ENCODE measurements at regions of chr11 and their contacts with region 1.

Region 1: GRCh38 chr11:10540923-10541560 is at the start of gene RNF141:
- DNase-seq: peak; percentile 89 to 98 (median 95)
- ATAC-seq: peak; percentile 98
- H3K4me3 ChIP-seq: peak within 1 kb of the TSS; percentile 78 to 83
- H3K4me3 Mint-ChIP-seq: peak within 1 kb of the TSS; percentile 91
- H3K27ac ChIP-seq: peak within 1 kb of the TSS; percentile 77 to 85
- H3K27ac Mint-ChIP-seq: peak within 1 kb of the TSS; percentile 89
- H3K4me1 ChIP-seq: peaks cover 13% of the 10 kb centered on the region
- H3K4me1 Mint-ChIP-seq: peaks cover 32% of the 10 kb centered on the region
- H3K27me3 ChIP-seq: no peaks in the 10 kb centered on the region
- H3K27me3 Mint-ChIP-seq: no peaks in the 10 kb centered on the region
- CTCF ChIP-seq: peak; percentile 85
- total RNA-seq, gene RNF141: 17.3 to 19.2 TPM

Region 2: GRCh38 chr11:8964324-8965320 is 1576.4 kb before region 1 on chr11 and contains the start of gene TMEM9B:
- CTCF ChIA-PET with region 1: no interaction called
- POLR2A ChIA-PET with region 1: no interaction called
- intact Hi-C with region 1: loop called in 1 of 2 experiments (anchors 5 kb)
- DNase-seq: peak; percentile 48 to 89 (median 75)
- ATAC-seq: peak; percentile 72
- H3K4me3 ChIP-seq: peak within 1 kb of the TSS; percentile 93 to 98
- H3K4me3 Mint-ChIP-seq: peak within 1 kb of the TSS; percentile 98
- H3K27ac ChIP-seq: peak within 1 kb of the TSS; percentile 94 to 99
- H3K27ac Mint-ChIP-seq: peak within 1 kb of the TSS; percentile 98
- H3K4me1 ChIP-seq: peaks cover 24% of the 10 kb centered on the region
- H3K4me1 Mint-ChIP-seq: peaks cover 36% of the 10 kb centered on the region
- H3K27me3 ChIP-seq: no peaks in the 10 kb centered on the region
- H3K27me3 Mint-ChIP-seq: no peaks in the 10 kb centered on the region
- CTCF ChIP-seq: no peak
- total RNA-seq, gene TMEM9B: 27.5 to 28.5 TPM

Region 3: GRCh38 chr11:10441652-10442503 is 99.2 kb before region 1 on chr11:
- CTCF ChIA-PET with region 1: interaction called, 12 read pairs
- POLR2A ChIA-PET with region 1: no interaction called
- intact Hi-C with region 1: no loop called
- DNase-seq: peak in 2 of 9 experiments; percentile 30 to 55
- ATAC-seq: peak; percentile 69
- H3K4me3 ChIP-seq: no peak overlapping the region
- H3K4me3 Mint-ChIP-seq: peak overlapping the region; percentile 4
- H3K27ac ChIP-seq: peak overlapping the region in 1 of 2 experiments; percentile 39
- H3K27ac Mint-ChIP-seq: peak overlapping the region; percentile 82
- H3K4me1 ChIP-seq: peaks cover 24% of the 10 kb centered on the region
- H3K4me1 Mint-ChIP-seq: peaks cover 41% of the 10 kb centered on the region
- H3K27me3 ChIP-seq: no peaks in the 10 kb centered on the region
- H3K27me3 Mint-ChIP-seq: no peaks in the 10 kb centered on the region
- CTCF ChIP-seq: no peak

Region 4: GRCh38 chr11:10455637-10456487 is 85.2 kb before region 1 on chr11:
- CTCF ChIA-PET with region 1: interaction called, 19 read pairs
- POLR2A ChIA-PET with region 1: interaction called, 11 read pairs
- intact Hi-C with region 1: loop called (anchors 2 to 5 kb)
- DNase-seq: peak; percentile 30 to 87 (median 74)
- ATAC-seq: peak; percentile 74
- H3K4me3 ChIP-seq: peak overlapping the region; percentile 52 to 54
- H3K4me3 Mint-ChIP-seq: peak overlapping the region; percentile 91
- H3K27ac ChIP-seq: peak overlapping the region; percentile 10 to 67
- H3K27ac Mint-ChIP-seq: peak overlapping the region; percentile 98
- H3K4me1 ChIP-seq: peaks cover 58% of the 10 kb centered on the region
- H3K4me1 Mint-ChIP-seq: peaks cover 81% of the 10 kb centered on the region
- H3K27me3 ChIP-seq: no peaks in the 10 kb centered on the region
- H3K27me3 Mint-ChIP-seq: no peaks in the 10 kb centered on the region
- CTCF ChIP-seq: no peak

Region 5: GRCh38 chr11:10653926-10654810 is 113.1 kb after region 1 on chr11:
- CTCF ChIA-PET with region 1: interaction called, 13 read pairs
- POLR2A ChIA-PET with region 1: no interaction called
- intact Hi-C with region 1: loop called in 1 of 2 experiments (anchors 2 kb)
- DNase-seq: peak in 7 of 9 experiments; percentile 17 to 75 (median 35)
- ATAC-seq: peak; percentile 71
- H3K4me3 ChIP-seq: no peak overlapping the region
- H3K4me3 Mint-ChIP-seq: no peak overlapping the region
- H3K27ac ChIP-seq: no peak overlapping the region
- H3K27ac Mint-ChIP-seq: no peak overlapping the region
- H3K4me1 ChIP-seq: no peaks in the 10 kb centered on the region
- H3K4me1 Mint-ChIP-seq: no peaks in the 10 kb centered on the region
- H3K27me3 ChIP-seq: no peaks in the 10 kb centered on the region
- H3K27me3 Mint-ChIP-seq: no peaks in the 10 kb centered on the region
- CTCF ChIP-seq: peak; percentile 69

Region 6: GRCh38 chr11:10750838-10751580 is 210.0 kb after region 1 on chr11 and contains the start of gene CTR9:
- CTCF ChIA-PET with region 1: interaction called, 3 read pairs
- POLR2A ChIA-PET with region 1: no interaction called
- intact Hi-C with region 1: loop called (anchors 1 to 5 kb)
- DNase-seq: peak; percentile 77 to 95 (median 90)
- ATAC-seq: peak; percentile 85
- H3K4me3 ChIP-seq: peak within 1 kb of the TSS; percentile 93 to 98
- H3K4me3 Mint-ChIP-seq: peak within 1 kb of the TSS; percentile 97
- H3K27ac ChIP-seq: peak within 1 kb of the TSS; percentile 66 to 81
- H3K27ac Mint-ChIP-seq: peak within 1 kb of the TSS; percentile 94
- H3K4me1 ChIP-seq: peaks cover 14% of the 10 kb centered on the region
- H3K4me1 Mint-ChIP-seq: peaks cover 33% of the 10 kb centered on the region
- H3K27me3 ChIP-seq: no peaks in the 10 kb centered on the region
- H3K27me3 Mint-ChIP-seq: no peaks in the 10 kb centered on the region
- CTCF ChIP-seq: no peak
- total RNA-seq, gene CTR9: 45.9 to 49.2 TPM